Activated CD8-positive, alpha-beta memory T cell treated with anti-CD3 and anti-CD28 coated beads, Interleukin-2, amount 10 ng/mL, durations not matched to agents 7 days and 5 days (primary cell): ENCODE measurements at regions of chr17 and their contacts with region 1.

Region 1: GRCh38 chr17:38982858-38983746 is 15.9 kb upstream of the FBXO47 start:
- DNase-seq: peak; percentile 70
- ATAC-seq: peak; percentile 60
- H3K4me3 Mint-ChIP-seq: no peak overlapping the region
- H3K27ac Mint-ChIP-seq: no peak overlapping the region
- H3K4me1 Mint-ChIP-seq: peaks cover 7% of the 10 kb centered on the region
- H3K27me3 Mint-ChIP-seq: peaks cover 11% of the 10 kb centered on the region

Region 2: GRCh38 chr17:38705803-38706504 is 277.1 kb before region 1 on chr17:
- CTCF ChIA-PET with region 1: no interaction called
- DNase-seq: no peak
- ATAC-seq: no peak
- H3K4me3 Mint-ChIP-seq: peak overlapping the region; percentile 90
- H3K27ac Mint-ChIP-seq: peak overlapping the region; percentile 90
- H3K4me1 Mint-ChIP-seq: peaks cover 48% of the 10 kb centered on the region
- H3K27me3 Mint-ChIP-seq: no peaks in the 10 kb centered on the region

Region 3: GRCh38 chr17:38868817-38869525 is 114.1 kb before region 1 on chr17:
- CTCF ChIA-PET with region 1: interaction called, 27 read pairs
- DNase-seq: peak; percentile 93
- ATAC-seq: peak; percentile 51
- H3K4me3 Mint-ChIP-seq: peak overlapping the region; percentile 88
- H3K27ac Mint-ChIP-seq: peak overlapping the region; percentile 92
- H3K4me1 Mint-ChIP-seq: peaks cover 44% of the 10 kb centered on the region
- H3K27me3 Mint-ChIP-seq: peaks cover 2% of the 10 kb centered on the region

Region 4: DNA sequence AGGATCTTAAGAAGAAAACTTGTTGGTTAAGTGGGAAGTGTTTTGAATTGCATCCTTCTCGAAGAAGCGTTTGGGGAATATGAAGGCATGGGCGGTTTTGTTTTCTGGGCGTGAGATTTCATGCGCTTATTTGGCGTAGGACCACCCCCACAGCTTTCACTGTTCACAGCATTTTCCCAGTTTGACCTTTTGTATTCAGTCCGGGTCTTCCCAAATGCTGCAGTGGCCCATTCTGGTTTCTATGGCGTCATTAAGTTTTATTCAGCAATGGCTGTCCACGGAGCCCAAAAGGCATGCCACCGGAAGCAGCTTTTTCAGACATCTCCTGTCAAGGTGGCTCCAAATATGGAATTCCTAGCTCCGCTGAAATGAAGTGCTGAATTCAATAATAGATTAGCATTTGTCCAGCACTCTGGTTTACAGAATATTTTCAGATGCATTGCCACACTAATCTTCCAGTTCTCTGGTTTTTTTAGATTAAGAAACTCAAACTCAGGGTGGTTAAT is 74.7 kb after region 1 on chr17:
- CTCF ChIA-PET with region 1: interaction called, 14 read pairs
- DNase-seq: no peak
- ATAC-seq: no peak
- H3K4me3 Mint-ChIP-seq: peak overlapping the region; percentile 74
- H3K27ac Mint-ChIP-seq: peak overlapping the region; percentile 82
- H3K4me1 Mint-ChIP-seq: peaks cover 19% of the 10 kb centered on the region
- H3K27me3 Mint-ChIP-seq: peaks cover 13% of the 10 kb centered on the region

Region 5: GRCh38 chr17:39153599-39154051 is 170.5 kb after region 1 on chr17:
- CTCF ChIA-PET with region 1: interaction called, 194 read pairs
- DNase-seq: peak; percentile 95
- ATAC-seq: peak; percentile 58
- H3K4me3 Mint-ChIP-seq: peak overlapping the region; percentile 82
- H3K27ac Mint-ChIP-seq: peak overlapping the region; percentile 87
- H3K4me1 Mint-ChIP-seq: peaks cover 30% of the 10 kb centered on the region
- H3K27me3 Mint-ChIP-seq: peaks cover 25% of the 10 kb centered on the region

Region 6: DNA sequence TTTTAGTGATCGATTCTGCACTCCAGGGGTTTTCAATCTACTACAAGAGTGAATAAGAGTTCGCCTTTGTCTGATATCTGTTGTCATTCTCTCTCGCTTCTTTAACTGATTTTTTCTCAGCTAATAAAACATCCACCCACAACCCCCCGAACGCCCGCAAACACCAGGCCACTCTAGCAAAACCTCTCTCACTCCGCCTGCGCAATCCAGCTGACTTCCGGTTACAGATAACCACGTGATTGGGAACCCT is 216.6 kb after region 1 on chr17:
- CTCF ChIA-PET with region 1: interaction called, 10 read pairs
- DNase-seq: peak; percentile 95
- ATAC-seq: peak; percentile 62
- H3K4me3 Mint-ChIP-seq: peak overlapping the region; percentile 89
- H3K27ac Mint-ChIP-seq: peak overlapping the region; percentile 99
- H3K4me1 Mint-ChIP-seq: peaks cover 57% of the 10 kb centered on the region
- H3K27me3 Mint-ChIP-seq: no peaks in the 10 kb centered on the region